ENCODE measurements at regions of chr12 and their contacts with region 1.

Region 1: DNA sequence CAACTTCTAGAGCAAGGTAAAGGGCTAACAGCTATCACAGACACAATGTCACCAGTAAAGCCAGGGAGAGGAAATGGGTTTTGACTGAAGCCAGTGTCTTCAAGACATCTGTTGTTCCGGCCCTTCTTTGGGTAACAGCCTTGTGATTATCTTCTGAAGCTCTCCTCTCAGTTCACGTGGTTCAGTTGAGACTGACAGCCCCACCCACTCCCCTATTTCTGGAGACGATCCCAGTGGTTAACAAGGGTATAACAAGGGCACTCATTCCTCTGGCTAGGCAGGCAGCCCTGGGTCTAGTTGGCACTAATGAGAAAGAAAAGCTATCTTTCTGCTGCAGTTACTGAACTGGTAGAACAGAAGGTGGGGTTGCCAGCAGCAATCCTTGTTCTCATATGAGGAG is 6.9 kb downstream of the GNPTAB start:
- DNase-seq: peak; percentile 76
- ATAC-seq: peak; percentile 93
- H3K4me3 Mint-ChIP-seq: peak overlapping the region; percentile 16
- H3K27ac Mint-ChIP-seq: peak overlapping the region; percentile 61
- H3K4me1 Mint-ChIP-seq: peaks cover 79% of the 10 kb centered on the region
- H3K27me3 Mint-ChIP-seq: no peaks in the 10 kb centered on the region

Region 2: DNA sequence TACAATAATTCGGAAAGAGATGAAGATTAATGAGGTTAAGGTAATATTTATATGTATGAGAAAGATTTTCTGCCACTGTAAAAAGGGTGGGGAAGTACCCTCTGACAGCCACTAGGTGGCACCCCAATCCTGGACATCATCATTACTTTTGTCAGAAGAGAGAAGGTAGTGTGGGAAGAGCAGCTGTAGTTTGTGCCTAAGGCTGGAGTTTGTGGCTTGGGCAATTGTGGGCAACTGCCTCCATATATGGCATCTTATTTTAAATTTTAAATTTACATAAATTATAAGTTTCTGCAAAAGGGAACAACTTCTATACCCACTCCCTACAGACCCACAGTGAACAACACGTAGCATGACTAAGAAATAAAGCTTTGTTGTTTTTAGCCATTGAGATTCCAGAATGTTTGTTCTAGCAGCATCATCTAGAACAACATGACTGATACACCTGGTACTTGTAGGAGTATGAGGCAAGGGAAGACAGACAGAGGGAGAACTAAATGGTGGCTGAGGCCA is 50.2 kb before region 1 on chr12:
- CTCF ChIA-PET with region 1: interaction called, 280 read pairs
- POLR2A ChIA-PET with region 1: no interaction called
- intact Hi-C with region 1: no loop called
- DNase-seq: peak; percentile 78
- ATAC-seq: peak; percentile 87
- H3K4me3 Mint-ChIP-seq: no peak overlapping the region
- H3K27ac Mint-ChIP-seq: peak overlapping the region; percentile 65
- H3K4me1 Mint-ChIP-seq: peaks cover 9% of the 10 kb centered on the region
- H3K27me3 Mint-ChIP-seq: no peaks in the 10 kb centered on the region

Region 3: DNA sequence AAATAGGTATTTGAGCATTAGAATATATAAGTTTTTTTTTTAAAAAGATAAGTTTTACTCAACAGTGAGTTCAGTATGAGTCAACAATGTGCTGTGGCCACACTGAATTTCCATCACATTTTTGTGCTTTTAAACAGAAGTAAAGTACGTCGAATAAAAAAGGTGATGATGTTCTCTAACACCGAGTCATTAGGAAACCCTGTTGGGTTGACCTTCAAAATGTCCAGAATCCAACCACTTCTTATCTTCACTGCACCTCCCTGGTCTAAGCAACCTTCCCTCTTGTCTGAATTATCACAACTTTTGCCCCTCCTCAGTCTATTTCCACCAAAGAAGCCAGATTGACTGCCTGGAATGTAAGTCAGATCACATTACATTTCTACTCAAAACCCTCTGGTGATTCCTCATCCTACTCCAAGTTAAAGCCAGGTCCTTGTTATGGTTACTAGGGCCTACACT is 41.6 kb before region 1 on chr12:
- CTCF ChIA-PET with region 1: interaction called, 32 read pairs
- POLR2A ChIA-PET with region 1: no interaction called
- intact Hi-C with region 1: no loop called
- DNase-seq: peak; percentile 28
- ATAC-seq: peak; percentile 71
- H3K4me3 Mint-ChIP-seq: no peak overlapping the region
- H3K27ac Mint-ChIP-seq: peak overlapping the region; percentile 86
- H3K4me1 Mint-ChIP-seq: peaks cover 24% of the 10 kb centered on the region
- H3K27me3 Mint-ChIP-seq: no peaks in the 10 kb centered on the region

Region 4: GRCh38 chr12:101792051-101792931 is 31.6 kb before region 1 on chr12:
- CTCF ChIA-PET with region 1: interaction called, 6 read pairs
- POLR2A ChIA-PET with region 1: no interaction called
- intact Hi-C with region 1: loop called (anchors 1 to 2 kb)
- DNase-seq: no peak
- ATAC-seq: no peak
- H3K4me3 Mint-ChIP-seq: no peak overlapping the region
- H3K27ac Mint-ChIP-seq: no peak overlapping the region
- H3K4me1 Mint-ChIP-seq: peaks cover 25% of the 10 kb centered on the region
- H3K27me3 Mint-ChIP-seq: no peaks in the 10 kb centered on the region

Region 5: DNA sequence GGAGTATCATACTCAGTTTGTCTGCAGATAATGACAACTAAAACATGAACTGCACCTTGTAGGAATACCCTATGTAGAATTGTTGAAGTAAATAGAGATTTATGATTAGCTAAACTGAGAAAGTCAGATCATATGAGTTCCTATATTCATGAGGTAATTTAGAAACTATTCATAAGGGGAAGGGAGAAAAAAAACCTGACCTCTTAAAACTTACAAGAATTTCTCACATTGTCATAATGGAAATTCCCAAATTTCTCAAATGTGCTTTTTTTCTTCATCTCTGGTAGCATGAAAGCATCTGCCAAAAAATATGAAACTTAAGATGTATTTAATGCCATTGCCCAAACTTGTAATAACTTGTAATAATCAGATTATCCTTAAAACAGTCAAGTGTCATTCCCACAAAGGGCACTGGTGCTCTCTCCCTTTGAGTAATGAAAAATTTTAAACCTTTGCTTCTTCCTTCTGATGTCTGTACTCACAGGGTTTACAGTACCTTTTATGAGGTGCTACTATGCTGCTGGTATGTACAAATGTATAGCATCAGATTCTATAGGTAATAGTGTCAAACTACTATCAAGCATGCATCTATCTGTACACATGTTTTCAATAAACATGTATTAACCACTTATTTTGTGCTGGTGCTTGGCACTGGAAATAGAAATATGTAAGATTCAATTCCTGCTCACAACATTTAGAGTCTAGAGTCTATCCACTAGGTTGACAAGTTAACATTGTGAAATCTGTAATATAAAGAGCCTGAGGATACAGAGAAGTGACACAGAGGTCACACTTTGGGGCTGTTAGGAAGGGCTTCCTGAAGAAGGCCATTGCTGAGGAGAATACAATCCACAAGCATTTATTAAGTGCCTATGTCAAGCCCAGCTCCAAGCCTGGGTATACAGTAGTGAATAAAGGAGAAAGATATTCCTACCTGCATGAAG is 36.0 kb after region 1 on chr12:
- CTCF ChIA-PET with region 1: no interaction called
- POLR2A ChIA-PET with region 1: no interaction called
- intact Hi-C with region 1: loop called in 1 of 2 experiments (anchors 1 kb)
- DNase-seq: no peak
- ATAC-seq: peak; percentile 87
- H3K4me3 Mint-ChIP-seq: no peak overlapping the region
- H3K27ac Mint-ChIP-seq: no peak overlapping the region
- H3K4me1 Mint-ChIP-seq: peaks cover 27% of the 10 kb centered on the region
- H3K27me3 Mint-ChIP-seq: peaks cover 1% of the 10 kb centered on the region